Activated naive CD4-positive, alpha-beta T cell treated with anti-CD3 and anti-CD28 coated beads for 36 hours (primary cell): ENCODE measurements at regions of chr11 and their contacts with region 1.

Region 1: DNA sequence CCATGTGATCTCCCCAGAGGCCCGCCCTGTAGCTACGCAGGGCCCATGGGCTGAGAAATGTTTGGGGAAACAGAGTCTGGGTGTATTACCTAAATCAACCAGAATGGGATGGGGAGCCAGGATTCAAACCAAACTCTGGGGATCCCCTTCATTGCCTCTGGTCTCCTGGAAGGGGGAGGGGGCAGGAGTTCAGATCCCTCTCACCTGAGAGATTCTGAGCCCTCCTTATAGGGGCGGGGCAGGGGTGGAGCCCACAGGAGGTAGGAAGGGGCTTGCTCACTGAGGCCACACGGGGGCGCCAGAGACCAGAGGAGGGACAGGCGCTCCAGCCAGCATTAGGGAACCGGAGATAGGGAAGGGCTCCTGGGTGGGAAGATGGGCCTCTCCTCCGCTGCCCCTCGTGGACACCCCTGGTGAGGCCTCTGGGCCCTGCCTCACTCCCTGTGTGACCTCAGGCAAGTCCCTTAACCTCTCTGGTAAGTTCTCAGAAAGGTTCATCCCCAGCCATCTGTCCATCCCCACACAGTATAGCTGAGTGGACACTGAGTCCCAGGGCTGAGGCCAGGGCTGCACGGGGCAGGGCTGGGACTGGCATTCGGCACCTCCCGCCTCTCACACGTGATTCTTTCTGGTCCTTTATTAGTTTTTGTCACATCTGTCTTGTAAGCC is 2.7 kb upstream of the CDC42BPG start:
- DNase-seq: peak; percentile 96
- H3K4me3 Mint-ChIP-seq: no peak overlapping the region
- H3K27ac Mint-ChIP-seq: no peak overlapping the region
- H3K4me1 Mint-ChIP-seq: peaks cover 57% of the 10 kb centered on the region
- H3K27me3 Mint-ChIP-seq: no peaks in the 10 kb centered on the region

Region 2: GRCh38 chr11:64787526-64788320 is 59.4 kb before region 1 on chr11:
- CTCF ChIA-PET with region 1: interaction called, 3 read pairs
- intact Hi-C with region 1: loop called (anchors 2 kb)
- DNase-seq: peak; percentile 73
- H3K4me3 Mint-ChIP-seq: no peak overlapping the region
- H3K27ac Mint-ChIP-seq: no peak overlapping the region
- H3K4me1 Mint-ChIP-seq: peaks cover 11% of the 10 kb centered on the region
- H3K27me3 Mint-ChIP-seq: no peaks in the 10 kb centered on the region

Region 3: DNA sequence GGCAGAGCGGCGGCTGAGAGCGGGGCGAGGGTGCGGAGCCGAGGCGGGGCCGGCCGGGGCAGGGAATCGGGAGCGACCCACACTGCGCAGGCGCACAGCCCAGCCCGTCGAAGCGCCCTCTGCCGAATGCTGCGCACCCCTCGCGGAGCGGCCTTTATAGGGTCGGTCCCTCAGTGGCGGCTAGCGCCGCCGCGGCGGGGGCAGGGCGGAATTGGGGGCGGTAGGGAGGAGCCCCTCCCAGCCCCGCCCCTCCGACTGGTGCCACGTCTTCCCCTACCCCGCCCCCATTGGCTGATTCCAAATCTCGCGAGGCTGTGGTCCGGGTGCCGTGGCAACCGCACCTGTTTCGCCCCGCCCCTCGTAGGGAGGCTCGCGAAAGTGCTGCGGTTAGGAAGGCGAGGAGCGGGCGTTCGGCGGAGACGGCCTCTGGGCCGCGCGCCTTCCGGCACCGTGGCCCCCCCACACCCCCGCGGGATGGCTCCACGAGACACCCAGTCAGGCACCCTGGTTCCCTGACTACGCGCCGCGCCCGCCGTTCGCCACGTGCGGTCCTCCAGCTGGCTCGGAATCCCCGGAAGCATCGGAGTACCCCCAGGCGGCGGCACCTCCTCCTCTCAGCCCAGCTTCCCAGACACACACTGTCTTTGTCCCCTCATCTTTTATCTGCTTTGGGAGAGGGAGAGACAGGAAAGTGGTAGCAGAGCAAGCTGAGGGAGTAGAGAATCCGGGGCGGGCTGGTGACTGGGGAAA is 31.5 kb after region 1 on chr11 and contains the start of gene EHD1:
- CTCF ChIA-PET with region 1: interaction called, 992 read pairs
- intact Hi-C with region 1: loop called (anchors 1 kb)
- DNase-seq: peak; percentile 100
- H3K4me3 Mint-ChIP-seq: peak within 1 kb of the TSS; percentile 93
- H3K27ac Mint-ChIP-seq: peak within 1 kb of the TSS; percentile 96
- H3K4me1 Mint-ChIP-seq: peaks cover 58% of the 10 kb centered on the region
- H3K27me3 Mint-ChIP-seq: no peaks in the 10 kb centered on the region
- total RNA-seq, gene EHD1: 124 to 132 TPM

Region 4: GRCh38 chr11:64924102-64924851 is 77.1 kb after region 1 on chr11 and contains the start of gene PPP2R5B:
- CTCF ChIA-PET with region 1: interaction called, 4 read pairs
- intact Hi-C with region 1: loop called (anchors 2 kb)
- DNase-seq: peak; percentile 92
- H3K4me3 Mint-ChIP-seq: peak within 1 kb of the TSS; percentile 87
- H3K27ac Mint-ChIP-seq: peak within 1 kb of the TSS; percentile 93
- H3K4me1 Mint-ChIP-seq: peaks cover 19% of the 10 kb centered on the region
- H3K27me3 Mint-ChIP-seq: no peaks in the 10 kb centered on the region
- total RNA-seq, gene PPP2R5B: 3.3 to 4.6 TPM

Region 5: GRCh38 chr11:64951529-64951928 is 104.4 kb after region 1 on chr11:
- CTCF ChIA-PET with region 1: no interaction called
- intact Hi-C with region 1: no loop called
- DNase-seq: no peak
- H3K4me3 Mint-ChIP-seq: no peak overlapping the region
- H3K27ac Mint-ChIP-seq: no peak overlapping the region
- H3K4me1 Mint-ChIP-seq: peaks cover 4% of the 10 kb centered on the region
- H3K27me3 Mint-ChIP-seq: peaks cover 5% of the 10 kb centered on the region

Region 6: DNA sequence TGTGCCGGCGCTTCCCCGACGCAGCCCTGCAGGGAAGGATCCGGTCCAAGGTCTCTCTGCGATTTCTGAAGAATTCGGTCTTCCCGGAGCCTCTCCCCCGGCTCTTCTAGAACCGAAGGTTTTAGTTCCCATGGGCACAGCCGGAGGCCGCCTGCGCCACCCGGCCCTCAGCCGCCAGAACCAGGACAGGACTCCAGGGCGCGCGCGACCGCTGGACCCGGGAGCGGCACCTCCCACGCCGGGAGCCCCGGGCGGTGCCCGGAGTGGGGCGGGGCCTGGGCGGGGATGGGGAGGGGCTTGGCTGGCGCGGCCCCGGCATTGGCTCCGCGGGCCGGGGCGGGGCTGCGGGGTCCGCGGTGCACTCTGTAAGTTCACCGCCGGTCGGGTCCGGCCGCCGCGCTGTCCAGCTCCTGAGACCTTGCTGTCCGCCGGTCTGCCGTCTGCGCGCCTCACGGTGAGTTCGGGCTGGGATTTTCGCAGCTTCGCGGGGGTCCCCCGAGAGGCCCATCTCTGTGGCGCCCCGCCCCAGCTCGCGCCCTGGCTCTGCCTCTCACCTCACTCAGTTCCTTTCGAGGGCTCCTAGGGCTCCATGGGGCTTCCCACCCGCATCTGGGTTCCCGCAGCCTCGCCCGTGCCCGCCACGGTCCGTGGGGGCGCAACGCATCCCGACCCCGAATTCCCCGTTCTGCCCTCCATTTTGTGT is 467.5 kb after region 1 on chr11 and contains the start of gene CDC42EP2:
- CTCF ChIA-PET with region 1: interaction called, 4 read pairs
- intact Hi-C with region 1: loop called (anchors 1 kb)
- DNase-seq: peak; percentile 72
- H3K4me3 Mint-ChIP-seq: peak within 1 kb of the TSS; percentile 74
- H3K27ac Mint-ChIP-seq: no peak within 1 kb of the TSS
- H3K4me1 Mint-ChIP-seq: peaks cover 5% of the 10 kb centered on the region
- H3K27me3 Mint-ChIP-seq: peaks cover 8% of the 10 kb centered on the region
- total RNA-seq, gene CDC42EP2: 0.57 to 1.5 TPM